OCI-LY7 (cell line): ENCODE measurements at regions of chr1 and their contacts with region 1.

Region 1: GRCh38 chr1:40612345-40612831 is 53.1 kb downstream of the RIMS3 start:
- DNase-seq: peak; percentile 82
- H3K4me3 ChIP-seq: no peak overlapping the region
- H3K27ac ChIP-seq: no peak overlapping the region
- H3K4me1 ChIP-seq: no peaks in the 10 kb centered on the region
- CTCF ChIP-seq: peak; percentile 97

Region 2: DNA sequence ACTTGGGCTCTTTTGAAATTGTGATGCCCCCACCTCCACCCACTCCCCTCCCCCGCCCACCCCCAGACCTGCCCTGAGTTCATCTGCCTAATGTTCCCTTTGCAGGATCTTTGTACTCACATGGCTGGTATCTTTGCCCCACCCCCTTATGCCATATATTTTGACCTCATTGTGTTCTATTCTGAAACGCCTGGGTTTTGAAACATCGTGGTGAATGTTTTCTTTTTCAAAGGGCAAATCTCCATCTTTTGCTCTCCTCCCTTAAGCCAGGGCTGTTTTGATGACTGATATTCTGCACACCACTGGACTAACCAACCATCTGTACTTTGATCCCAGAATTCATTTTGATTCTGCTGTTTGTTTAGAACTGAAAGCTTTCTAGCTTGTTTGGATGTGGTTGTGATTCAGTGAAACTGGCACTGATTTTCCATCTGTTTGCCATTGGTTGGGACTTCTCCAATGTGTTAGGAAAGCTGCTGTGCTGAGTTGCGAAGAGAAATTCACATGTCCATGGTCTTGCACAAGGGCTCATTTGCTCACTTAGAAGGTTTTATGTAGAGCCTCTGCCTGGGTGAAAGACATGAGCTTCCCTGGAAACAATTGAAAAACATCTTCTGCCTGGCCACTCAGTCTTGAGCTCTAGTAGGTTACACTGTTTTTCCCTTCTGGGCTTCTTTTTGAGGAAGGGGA is 222.4 kb before region 1 on chr1:
- CTCF ChIA-PET with region 1: no interaction called
- POLR2A ChIA-PET with region 1: no interaction called
- intact Hi-C with region 1: no loop called
- DNase-seq: no peak
- H3K4me3 ChIP-seq: peak overlapping the region; percentile 11
- H3K27ac ChIP-seq: peak overlapping the region; percentile 74
- H3K4me1 ChIP-seq: peaks cover 93% of the 10 kb centered on the region
- CTCF ChIP-seq: no peak

Region 3: DNA sequence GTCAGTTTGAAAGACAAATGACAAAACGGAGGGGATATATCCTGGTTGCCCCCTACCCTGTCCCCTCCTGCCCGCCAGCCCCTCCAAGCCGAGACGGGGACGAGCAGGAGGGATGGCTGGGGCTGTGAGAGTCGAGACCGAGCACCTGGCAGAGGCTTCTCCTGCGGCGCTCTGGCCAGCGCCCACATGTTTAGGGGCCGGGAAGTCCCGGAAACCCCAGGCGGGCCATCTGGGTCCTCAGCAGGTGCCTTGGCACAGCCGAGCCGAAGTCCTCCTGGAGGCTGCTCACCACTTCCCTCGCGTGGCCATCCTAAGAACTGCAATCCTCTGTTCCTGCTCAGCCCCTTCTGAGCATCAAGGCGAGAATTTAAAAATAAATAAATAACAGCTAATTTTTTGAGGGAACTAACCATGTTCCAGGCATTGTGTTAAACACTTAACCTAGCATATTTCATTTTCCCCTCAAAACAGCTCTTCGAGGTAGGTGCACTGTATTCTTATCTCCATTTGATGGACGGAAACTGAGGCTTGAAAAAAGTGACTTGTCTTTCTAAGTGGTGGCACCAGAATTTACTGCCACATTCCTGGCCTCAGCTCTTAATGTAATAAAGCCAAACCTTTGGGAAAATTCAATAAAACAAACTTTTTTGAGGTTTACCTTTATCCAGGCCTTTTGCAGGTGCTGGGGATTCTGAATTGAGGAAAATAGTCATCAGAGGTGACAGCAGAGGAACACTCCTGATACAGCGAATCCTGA is 56.6 kb after region 1 on chr1:
- CTCF ChIA-PET with region 1: no interaction called
- POLR2A ChIA-PET with region 1: no interaction called
- intact Hi-C with region 1: loop called (anchors 1 kb)
- DNase-seq: peak; percentile 91
- H3K4me3 ChIP-seq: peak overlapping the region; percentile 62
- H3K27ac ChIP-seq: peak overlapping the region; percentile 23
- H3K4me1 ChIP-seq: peaks cover 27% of the 10 kb centered on the region
- CTCF ChIP-seq: peak; percentile 94

Region 4: DNA sequence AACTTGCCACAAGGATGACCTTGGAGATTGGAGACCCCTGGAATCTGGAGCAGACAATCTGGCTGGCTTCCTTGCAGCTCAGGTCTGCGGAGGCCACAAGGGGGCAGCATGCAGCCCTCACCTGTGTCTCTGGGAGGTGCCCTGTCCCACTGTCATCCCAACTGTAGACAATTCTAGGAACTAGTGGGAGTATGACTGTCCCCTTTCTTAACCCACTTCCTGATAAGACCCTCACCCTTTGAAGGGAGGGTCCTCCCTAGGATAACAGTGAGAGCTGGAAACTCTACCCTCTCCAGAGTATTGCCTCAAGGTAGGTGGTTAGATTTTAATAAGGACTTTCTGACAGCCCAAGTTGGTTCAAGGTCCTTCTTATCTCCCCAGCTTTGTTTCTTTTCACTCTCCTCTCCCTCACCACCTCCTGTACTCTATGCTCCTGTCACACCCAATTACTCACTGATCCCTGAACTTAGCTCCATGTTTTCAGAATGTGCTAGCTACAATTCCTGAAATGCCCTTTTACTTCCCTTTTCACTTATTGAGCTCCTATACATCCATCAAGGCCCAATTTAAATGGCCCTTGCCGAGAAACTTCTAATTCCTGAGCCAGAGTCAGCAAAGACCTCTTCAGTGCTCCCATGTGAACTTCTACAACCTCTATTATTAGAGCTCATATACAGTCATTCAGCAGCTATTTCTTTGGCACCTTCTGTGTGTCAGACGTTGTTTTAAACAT is 162.0 kb after region 1 on chr1:
- CTCF ChIA-PET with region 1: interaction called, 3 read pairs
- POLR2A ChIA-PET with region 1: no interaction called
- intact Hi-C with region 1: loop called (anchors 2 kb)
- DNase-seq: peak; percentile 61
- H3K4me3 ChIP-seq: no peak overlapping the region
- H3K27ac ChIP-seq: no peak overlapping the region
- H3K4me1 ChIP-seq: no peaks in the 10 kb centered on the region
- CTCF ChIP-seq: peak; percentile 97

Region 5: DNA sequence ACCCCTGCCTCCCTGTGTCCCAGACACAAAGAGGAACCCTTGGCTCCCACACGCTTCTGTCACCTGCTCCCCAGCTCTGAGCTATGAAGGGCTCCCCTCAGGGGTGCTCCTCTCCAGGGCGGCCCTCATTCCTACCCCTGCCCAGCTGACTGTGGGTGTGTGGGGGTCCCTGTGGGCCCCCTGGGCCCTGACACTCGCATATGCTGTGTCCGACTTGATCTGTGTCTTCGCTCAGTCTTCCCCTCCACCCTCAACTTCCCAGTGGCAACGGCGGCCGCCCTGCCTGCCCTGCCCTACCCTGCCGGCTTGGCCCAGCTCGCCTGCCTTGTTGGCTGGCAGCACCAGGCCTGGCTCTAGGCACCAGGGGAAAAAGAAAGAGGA is 172.4 kb after region 1 on chr1:
- CTCF ChIA-PET with region 1: no interaction called
- POLR2A ChIA-PET with region 1: no interaction called
- intact Hi-C with region 1: no loop called
- DNase-seq: no peak
- H3K4me3 ChIP-seq: no peak overlapping the region
- H3K27ac ChIP-seq: no peak overlapping the region
- H3K4me1 ChIP-seq: no peaks in the 10 kb centered on the region
- CTCF ChIP-seq: no peak

Region 6: DNA sequence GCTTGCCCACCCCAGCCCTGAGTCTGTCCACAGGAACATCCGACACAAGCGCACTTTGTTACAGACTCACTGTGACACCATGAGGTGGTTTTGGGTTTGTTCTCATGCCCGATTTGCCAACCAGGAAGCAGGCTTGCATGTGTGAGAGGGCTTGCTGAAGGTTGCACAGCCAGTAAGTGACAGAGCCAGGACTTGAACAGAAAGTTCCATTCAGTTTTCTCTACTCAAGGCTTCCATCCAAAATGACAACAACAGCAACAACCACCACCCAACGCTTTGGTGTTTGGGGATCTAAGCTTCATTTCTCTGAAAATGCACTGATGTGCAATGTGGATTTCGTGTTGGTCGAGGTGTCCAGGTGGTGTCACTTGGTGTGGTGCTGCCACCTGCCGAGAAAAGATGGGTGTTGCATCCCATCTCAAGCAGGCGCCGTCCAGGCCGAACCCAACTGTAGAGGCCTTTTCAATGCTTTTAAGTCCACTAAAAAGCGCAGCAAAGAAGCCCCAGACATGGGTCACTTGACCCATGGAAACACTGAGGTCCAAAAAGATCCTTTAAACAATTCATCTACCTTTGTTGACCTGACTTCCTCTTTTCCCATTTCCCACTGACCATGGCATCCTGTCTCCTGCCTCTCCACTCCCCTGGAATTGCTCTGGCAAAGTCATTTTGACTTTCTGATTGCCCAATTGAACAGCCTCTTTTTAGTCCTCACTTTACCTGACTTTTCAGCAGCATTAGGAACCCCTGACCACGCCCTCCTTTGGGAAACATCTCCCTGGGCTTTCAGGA is 237.6 kb after region 1 on chr1:
- CTCF ChIA-PET with region 1: no interaction called
- POLR2A ChIA-PET with region 1: no interaction called
- intact Hi-C with region 1: loop called (anchors 1 kb)
- DNase-seq: peak; percentile 82
- H3K4me3 ChIP-seq: no peak overlapping the region
- H3K27ac ChIP-seq: no peak overlapping the region
- H3K4me1 ChIP-seq: peaks cover 19% of the 10 kb centered on the region
- CTCF ChIP-seq: peak; percentile 98

Region 7: GRCh38 chr1:40951943-40952743 is 339.8 kb after region 1 on chr1:
- CTCF ChIA-PET with region 1: no interaction called
- POLR2A ChIA-PET with region 1: no interaction called
- intact Hi-C with region 1: loop called (anchors 5 kb)
- DNase-seq: peak; percentile 56
- H3K4me3 ChIP-seq: no peak overlapping the region
- H3K27ac ChIP-seq: no peak overlapping the region
- H3K4me1 ChIP-seq: no peaks in the 10 kb centered on the region
- CTCF ChIP-seq: peak; percentile 93